ENCODE measurements at regions of chr22 and their contacts with region 1.

Region 1: GRCh38 chr22:37999956-38000272 is 15.6 kb upstream of the SOX10 start:
- DNase-seq: peak; percentile 83
- H3K4me3 Mint-ChIP-seq: no peak overlapping the region
- H3K27ac Mint-ChIP-seq: no peak overlapping the region
- H3K4me1 Mint-ChIP-seq: peaks cover 34% of the 10 kb centered on the region
- H3K27me3 Mint-ChIP-seq: no peaks in the 10 kb centered on the region
- CTCF ChIP-seq: no peak

Region 2: GRCh38 chr22:37982938-37983859 is 16.7 kb before region 1 on chr22:
- CTCF ChIA-PET with region 1: no interaction called
- intact Hi-C with region 1: no loop called
- DNase-seq: no peak
- H3K4me3 Mint-ChIP-seq: no peak overlapping the region
- H3K27ac Mint-ChIP-seq: no peak overlapping the region
- H3K4me1 Mint-ChIP-seq: no peaks in the 10 kb centered on the region
- H3K27me3 Mint-ChIP-seq: no peaks in the 10 kb centered on the region
- CTCF ChIP-seq: no peak

Region 3: GRCh38 chr22:38017272-38017920 is 17.5 kb after region 1 on chr22:
- CTCF ChIA-PET with region 1: interaction called, 4 read pairs
- intact Hi-C with region 1: loop called (anchors 1 kb)
- DNase-seq: peak; percentile 72
- H3K4me3 Mint-ChIP-seq: no peak overlapping the region
- H3K27ac Mint-ChIP-seq: no peak overlapping the region
- H3K4me1 Mint-ChIP-seq: peaks cover 29% of the 10 kb centered on the region
- H3K27me3 Mint-ChIP-seq: no peaks in the 10 kb centered on the region
- CTCF ChIP-seq: no peak

Region 4: GRCh38 chr22:38069372-38070249 is 69.7 kb after region 1 on chr22:
- CTCF ChIA-PET with region 1: no interaction called
- intact Hi-C with region 1: no loop called
- DNase-seq: no peak
- H3K4me3 Mint-ChIP-seq: no peak overlapping the region
- H3K27ac Mint-ChIP-seq: no peak overlapping the region
- H3K4me1 Mint-ChIP-seq: no peaks in the 10 kb centered on the region
- H3K27me3 Mint-ChIP-seq: no peaks in the 10 kb centered on the region
- CTCF ChIP-seq: peak; percentile 41

Region 5: DNA sequence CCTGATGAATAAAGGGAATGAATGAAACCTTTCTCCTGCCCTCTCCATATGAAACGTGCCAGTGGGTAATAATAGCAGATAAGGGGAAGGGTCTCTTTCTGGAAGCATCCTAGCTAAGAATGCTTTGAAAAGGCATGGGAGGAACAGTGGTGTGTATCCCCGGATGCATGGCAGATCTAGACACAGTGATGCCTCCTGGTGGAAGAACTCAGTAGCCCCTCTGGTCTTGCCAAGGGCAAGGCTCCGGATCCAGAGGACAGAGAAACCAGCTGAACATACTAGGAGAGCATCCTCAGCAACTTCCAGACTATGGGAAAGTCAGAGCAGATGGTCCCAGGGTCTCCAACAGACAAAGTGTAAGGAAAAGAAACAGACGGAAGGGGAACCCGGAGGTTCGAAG is 104.2 kb after region 1 on chr22:
- CTCF ChIA-PET with region 1: no interaction called
- intact Hi-C with region 1: no loop called
- DNase-seq: no peak
- H3K4me3 Mint-ChIP-seq: no peak overlapping the region
- H3K27ac Mint-ChIP-seq: peak overlapping the region; percentile 4
- H3K4me1 Mint-ChIP-seq: peaks cover 15% of the 10 kb centered on the region
- H3K27me3 Mint-ChIP-seq: no peaks in the 10 kb centered on the region
- CTCF ChIP-seq: no peak